ENCODE measurements at regions of chr3 and their contacts with region 1.

Region 1: DNA sequence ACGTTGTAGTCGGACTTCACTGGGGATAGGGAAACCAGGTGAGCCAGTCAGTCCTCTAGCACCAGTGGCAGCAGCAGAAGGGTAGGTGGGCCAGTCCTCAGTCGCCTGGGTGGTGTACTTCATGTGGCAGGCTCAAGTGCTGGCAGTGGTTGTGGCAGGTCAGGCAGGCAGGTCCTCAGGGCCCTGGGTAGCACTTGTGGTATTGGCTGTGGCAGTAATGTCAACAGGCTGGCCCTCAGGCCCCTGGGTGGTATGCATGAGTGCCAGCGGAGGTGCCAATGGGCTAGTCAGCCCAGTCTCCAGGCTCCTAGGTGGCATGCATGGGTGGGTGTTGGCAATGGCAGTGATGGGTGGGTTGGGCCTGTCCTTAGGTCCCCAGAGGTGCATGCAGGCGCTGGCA is 40.6 kb downstream of the FAIM start:
- DNase-seq: no peak
- H3K4me3 ChIP-seq: no peak overlapping the region
- H3K27ac ChIP-seq: no peak overlapping the region
- H3K4me1 ChIP-seq: no peaks in the 10 kb centered on the region
- H3K27me3 ChIP-seq: no peaks in the 10 kb centered on the region
- CTCF ChIP-seq: no peak
- POLR2A ChIP-seq: no peak

Region 2: GRCh38 chr3:138186803-138187295 is 462.3 kb before region 1 on chr3:
- intact Hi-C with region 1: loop called (anchors 5 kb)
- DNase-seq: no peak
- H3K4me3 ChIP-seq: peak overlapping the region; percentile 77 to 93
- H3K27ac ChIP-seq: peak overlapping the region; percentile 93
- H3K4me1 ChIP-seq: peaks cover 27% of the 10 kb centered on the region
- H3K27me3 ChIP-seq: no peaks in the 10 kb centered on the region
- CTCF ChIP-seq: no peak
- POLR2A ChIP-seq: no peak

Region 3: DNA sequence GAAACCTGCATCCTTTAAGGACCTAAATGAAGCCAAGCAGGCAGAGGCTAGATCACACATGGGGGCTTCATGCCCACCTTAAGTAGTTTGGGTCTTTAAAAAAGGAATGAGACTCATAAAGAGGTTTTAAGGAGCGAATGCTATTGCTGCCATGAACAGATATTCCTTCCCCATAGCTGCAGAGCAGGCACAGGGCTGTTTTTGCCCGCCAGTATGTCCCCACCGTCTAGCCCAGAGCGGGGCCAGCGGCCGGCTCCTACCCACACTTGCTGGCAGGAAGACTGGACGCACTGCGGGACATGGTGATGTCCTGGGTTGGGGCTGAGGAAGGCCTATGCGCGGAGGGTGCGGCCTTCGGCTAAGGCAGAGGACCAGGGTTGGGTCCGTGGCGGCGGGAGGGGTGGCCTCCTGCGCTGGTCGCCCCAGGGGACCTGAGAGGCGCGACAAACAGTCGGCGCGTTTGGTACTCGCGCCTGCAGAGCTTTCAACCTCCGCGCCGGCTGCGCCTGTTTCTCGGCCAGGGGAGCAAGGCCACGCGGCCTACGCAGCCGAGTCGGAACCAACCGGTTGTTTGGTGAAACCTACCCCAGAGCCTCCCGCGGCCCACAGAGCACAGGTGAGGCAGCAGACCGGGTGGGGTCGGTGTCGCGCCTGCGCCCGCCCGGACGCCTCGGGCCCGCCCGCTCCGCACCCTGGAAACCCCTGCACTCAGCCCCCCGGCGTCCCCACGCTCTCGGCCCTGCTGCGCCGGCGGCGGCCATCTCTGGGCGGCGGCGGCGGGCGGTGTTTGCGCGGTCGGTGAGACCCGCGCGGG is 40.6 kb before region 1 on chr3 and contains the start of gene FAIM:
- intact Hi-C with region 1: no loop called
- DNase-seq: no peak
- H3K4me3 ChIP-seq: peak within 1 kb of the TSS; percentile 64 to 87
- H3K27ac ChIP-seq: peak within 1 kb of the TSS; percentile 91
- H3K4me1 ChIP-seq: peaks cover 9% of the 10 kb centered on the region
- H3K27me3 ChIP-seq: no peaks in the 10 kb centered on the region
- CTCF ChIP-seq: no peak
- POLR2A ChIP-seq: no peak
- total RNA-seq, gene FAIM: 13.3 TPM

Region 4: GRCh38 chr3:139251529-139251928 is 602.4 kb after region 1 on chr3:
- intact Hi-C with region 1: no loop called
- DNase-seq: no peak
- H3K4me3 ChIP-seq: no peak overlapping the region
- H3K27ac ChIP-seq: no peak overlapping the region
- H3K4me1 ChIP-seq: no peaks in the 10 kb centered on the region
- H3K27me3 ChIP-seq: no peaks in the 10 kb centered on the region
- CTCF ChIP-seq: no peak
- POLR2A ChIP-seq: no peak

Measured in vagina (tissue), 2 donors.